ENCODE measurements at regions of chr18 and their contacts with region 1.

Region 1: GRCh38 chr18:12777500-12777944 is 74.7 kb downstream of the PSMG2 start:
- DNase-seq: no peak

Region 2: GRCh38 chr18:12726774-12727550 is 50.6 kb before region 1 on chr18:
- intact Hi-C with region 1: no loop called
- DNase-seq: no peak

Region 3: GRCh38 chr18:12750076-12750714 is 27.3 kb before region 1 on chr18:
- intact Hi-C with region 1: no loop called
- DNase-seq: no peak

Region 4: GRCh38 chr18:12857215-12857905 is 79.8 kb after region 1 on chr18:
- intact Hi-C with region 1: loop called (anchors 10 kb)
- DNase-seq: no peak

Region 5: GRCh38 chr18:12960853-12961397 is 183.4 kb after region 1 on chr18:
- intact Hi-C with region 1: no loop called
- DNase-seq: no peak